ENCODE measurements at regions of chr11 and their contacts with region 1.

Region 1: GRCh38 chr11:96342961-96343711 is at the start of gene MAML2:
- DNase-seq: peak; percentile 92
- ATAC-seq: peak; percentile 92
- total RNA-seq, gene MAML2: 4.1 TPM

Region 2: GRCh38 chr11:95835768-95836488 is 507.2 kb before region 1 on chr11:
- intact Hi-C with region 1: loop called (anchors 5 kb)
- DNase-seq: peak; percentile 28
- ATAC-seq: peak; percentile 96

Region 3: DNA sequence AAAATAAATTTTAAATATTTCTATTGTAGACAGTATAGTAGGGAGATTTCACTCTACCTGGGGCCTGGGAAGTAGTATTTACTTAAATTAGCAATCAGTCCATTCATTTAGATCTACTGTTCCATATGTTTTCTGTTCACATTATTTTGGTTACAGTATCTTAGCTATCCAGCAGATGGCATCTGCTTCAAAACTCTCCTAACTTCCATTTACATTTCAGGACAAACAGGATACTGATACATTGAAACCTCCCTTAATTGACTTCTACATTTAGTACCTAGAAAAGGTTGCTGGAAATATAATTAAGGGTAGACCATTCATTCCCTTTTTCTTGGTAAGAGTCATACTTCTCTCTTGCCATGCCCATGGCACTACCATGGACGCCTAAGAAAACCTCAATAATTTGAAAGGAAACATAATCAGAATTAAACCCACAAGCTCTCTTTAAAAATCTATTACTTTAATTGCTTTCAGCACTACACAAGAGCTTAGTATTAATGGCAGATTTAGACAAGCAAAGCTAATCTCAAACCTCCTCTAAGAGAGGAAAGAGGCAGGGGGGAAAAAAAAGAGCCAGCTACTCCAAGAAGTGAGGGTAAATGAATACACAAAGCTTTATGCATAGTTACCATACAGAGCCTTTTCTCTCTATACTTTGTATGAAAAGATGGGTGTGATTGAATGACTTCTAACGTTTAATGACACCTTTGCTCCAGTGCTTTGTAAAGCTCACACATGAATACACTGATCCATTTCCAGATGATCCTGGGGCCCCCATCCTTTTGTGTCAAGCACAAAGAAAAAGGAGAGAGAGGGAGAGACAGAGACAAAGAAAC is 288.0 kb before region 1 on chr11:
- intact Hi-C with region 1: loop called (anchors 5 kb)
- DNase-seq: no peak
- ATAC-seq: peak; percentile 55

Region 4: GRCh38 chr11:96293598-96294021 is 49.5 kb before region 1 on chr11:
- intact Hi-C with region 1: no loop called
- DNase-seq: no peak
- ATAC-seq: peak; percentile 24

Region 5: GRCh38 chr11:96324960-96325359 is 18.2 kb before region 1 on chr11:
- intact Hi-C with region 1: no loop called
- DNase-seq: no peak
- ATAC-seq: peak; percentile 33

Region 6: GRCh38 chr11:96389720-96390487 is 46.8 kb after region 1 on chr11 and contains the starts of genes CCDC82 and JRKL:
- intact Hi-C with region 1: no loop called
- DNase-seq: peak; percentile 97
- ATAC-seq: peak; percentile 100
- total RNA-seq, gene CCDC82: 14.1 TPM
- total RNA-seq, gene JRKL: 5.5 TPM